ACHN (cell line): ENCODE measurements at regions of chr7 and their contacts with region 1.

Region 1: DNA sequence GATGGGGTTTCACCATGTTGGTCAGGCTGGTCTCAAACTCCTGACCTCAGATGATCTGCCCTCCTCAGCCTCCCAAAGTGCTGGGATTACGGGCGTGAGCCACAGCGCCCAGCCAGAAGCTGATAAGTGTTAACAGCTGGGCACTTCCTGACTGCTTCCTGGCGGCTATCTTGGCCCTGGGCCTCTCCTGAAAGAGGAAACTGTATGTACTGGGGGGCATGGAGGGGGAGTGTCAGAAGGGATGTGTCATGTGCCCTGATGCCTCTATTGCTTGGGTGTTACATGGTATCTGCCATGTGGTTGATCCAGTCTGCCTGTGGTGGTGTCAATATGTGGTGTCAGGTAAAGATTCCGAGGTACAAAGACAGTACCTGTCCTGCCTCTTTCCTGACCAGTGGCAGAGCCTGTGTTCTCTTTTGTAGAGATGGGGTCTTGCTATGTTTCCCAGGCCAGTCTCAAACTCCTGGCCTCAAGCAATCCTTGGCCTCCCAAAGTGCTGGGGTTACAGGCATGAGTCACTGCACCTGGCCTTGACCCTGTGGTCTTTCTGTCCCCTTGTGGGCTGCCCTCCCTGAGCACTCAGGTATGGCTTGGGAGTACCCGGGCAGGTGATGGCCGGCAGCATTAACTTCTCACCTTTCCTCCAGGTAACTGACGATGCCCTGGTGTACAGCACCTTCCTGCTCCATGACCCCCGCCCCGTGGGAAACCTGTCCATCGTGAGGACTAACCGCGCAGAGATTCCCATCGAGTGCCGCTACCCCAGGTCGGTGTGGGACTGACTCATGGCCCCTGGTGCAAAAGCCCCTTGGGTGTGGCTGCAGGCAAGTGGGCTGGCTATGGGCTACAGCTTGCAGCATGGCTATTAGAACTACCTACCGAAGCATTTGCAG is 4.4 kb downstream of the ZP3 start:
- DNase-seq: no peak

Region 2: DNA sequence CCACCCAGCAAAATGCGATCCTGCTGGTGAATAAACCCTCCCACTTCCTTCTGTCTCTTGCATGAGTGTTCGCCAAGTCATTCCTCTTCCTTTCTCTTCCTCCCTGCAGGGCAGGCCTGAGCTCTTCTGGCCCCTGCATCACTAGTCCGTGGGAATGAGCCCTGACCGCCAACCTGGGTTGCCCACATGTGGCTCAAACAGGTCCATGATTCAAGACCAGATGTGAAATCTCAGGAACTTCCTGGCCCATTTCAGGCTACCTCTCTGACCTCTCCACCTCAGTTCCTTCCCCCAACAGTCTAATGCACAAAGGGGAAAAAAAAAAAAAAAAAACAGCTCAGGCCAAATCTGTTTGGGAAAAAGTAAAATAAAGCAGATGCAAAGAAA is 64.9 kb before region 1 on chr7:
- in situ Hi-C with region 1: loop called (anchors 10 kb)
- DNase-seq: peak; percentile 56